ENCODE measurements at regions of chr14 and their contacts with region 1.

Region 1: GRCh38 chr14:77053046-77053841 is 24.7 kb upstream of the IRF2BPL start:
- DNase-seq: peak; percentile 82

Region 2: GRCh38 chr14:76918751-76919543 is 134.3 kb before region 1 on chr14:
- in situ Hi-C with region 1: loop called (anchors 10 kb)
- DNase-seq: peak; percentile 57

Measured in KBM-7 (cell line).